ENCODE measurements at regions of chr16 and their contacts with region 1.

Region 1: DNA sequence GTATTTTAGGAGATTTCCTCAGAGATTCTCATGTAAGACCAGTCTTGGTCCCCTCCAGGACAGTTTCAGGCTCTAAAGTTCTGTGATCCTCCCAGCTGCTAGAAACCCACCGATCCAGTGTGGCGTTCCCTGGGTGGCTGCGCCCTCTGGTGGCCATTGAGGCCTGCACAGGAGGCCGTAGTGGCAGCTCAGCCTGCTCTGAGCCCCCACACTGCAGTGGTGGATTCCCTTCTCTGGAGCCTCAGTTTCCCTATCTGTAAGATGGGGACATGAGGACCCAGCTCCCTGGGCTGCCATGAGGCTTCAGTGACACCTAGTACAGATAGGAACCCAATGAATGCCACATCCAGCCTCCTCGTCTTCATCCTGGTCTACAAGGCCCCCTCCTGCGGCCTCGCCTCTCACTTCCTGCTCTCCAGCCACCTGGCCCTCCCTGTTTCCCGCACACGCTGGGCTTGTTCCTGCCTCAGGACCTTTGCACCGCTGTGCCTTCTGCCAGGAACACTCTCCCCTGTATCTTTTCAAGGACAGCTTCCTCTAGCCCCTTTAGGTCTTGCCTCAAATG is 16.5 kb downstream of the CCDC102A start:
- DNase-seq: peak; percentile 61 to 86 (median 73)
- ATAC-seq: peak; percentile 90
- H3K4me3 ChIP-seq: no peak overlapping the region
- H3K4me3 Mint-ChIP-seq: no peak overlapping the region
- H3K27ac ChIP-seq: no peak overlapping the region
- H3K27ac Mint-ChIP-seq: peak overlapping the region in 3 of 9 donors; percentile 62 to 83 (median 76)
- H3K4me1 ChIP-seq: peaks cover 7 to 8% of the 10 kb centered on the region in 2 donors
- H3K4me1 Mint-ChIP-seq: peaks cover 5 to 19% (median 6%) of the 10 kb centered on the region in 7 donors
- H3K27me3 ChIP-seq: no peaks in the 10 kb centered on the region
- H3K27me3 Mint-ChIP-seq: no peaks in the 10 kb centered on the region

Region 2: GRCh38 chr16:57416122-57416509 is 103.8 kb before region 1 on chr16:
- CTCF ChIA-PET with region 1: interaction called, 44 read pairs
- POLR2A ChIA-PET with region 1: no interaction called
- intact Hi-C with region 1: loop called (anchors 1 kb)
- DNase-seq: no peak
- ATAC-seq: no peak
- H3K4me3 ChIP-seq: no peak overlapping the region
- H3K4me3 Mint-ChIP-seq: no peak overlapping the region
- H3K27ac ChIP-seq: no peak overlapping the region
- H3K27ac Mint-ChIP-seq: no peak overlapping the region
- H3K4me1 ChIP-seq: peaks cover 11 to 18% of the 10 kb centered on the region in 2 donors
- H3K4me1 Mint-ChIP-seq: peaks cover 17 to 29% (median 23%) of the 10 kb centered on the region in 7 donors
- H3K27me3 ChIP-seq: no peaks in the 10 kb centered on the region
- H3K27me3 Mint-ChIP-seq: no peaks in the 10 kb centered on the region

Region 3: GRCh38 chr16:57422026-57422944 is 97.6 kb before region 1 on chr16:
- CTCF ChIA-PET with region 1: interaction called, 44 read pairs
- POLR2A ChIA-PET with region 1: interaction called, 3 read pairs
- intact Hi-C with region 1: loop called (anchors 1 kb)
- DNase-seq: no peak
- ATAC-seq: no peak
- H3K4me3 ChIP-seq: no peak overlapping the region
- H3K4me3 Mint-ChIP-seq: no peak overlapping the region
- H3K27ac ChIP-seq: no peak overlapping the region
- H3K27ac Mint-ChIP-seq: peak overlapping the region in 1 of 9 donors; percentile 48
- H3K4me1 ChIP-seq: peaks cover 9 to 10% of the 10 kb centered on the region in 2 donors
- H3K4me1 Mint-ChIP-seq: peaks cover 11 to 29% (median 24%) of the 10 kb centered on the region in 7 donors
- H3K27me3 ChIP-seq: no peaks in the 10 kb centered on the region
- H3K27me3 Mint-ChIP-seq: no peaks in the 10 kb centered on the region

Region 4: GRCh38 chr16:57462209-57462977 is 57.5 kb before region 1 on chr16 and contains the start of gene POLR2C:
- CTCF ChIA-PET with region 1: interaction called, 3 read pairs
- POLR2A ChIA-PET with region 1: interaction called, 6 read pairs
- intact Hi-C with region 1: loop called (anchors 1 to 5 kb)
- DNase-seq: peak; percentile 84 to 96 (median 92)
- ATAC-seq: peak; percentile 99
- H3K4me3 ChIP-seq: peak within 1 kb of the TSS; percentile 86
- H3K4me3 Mint-ChIP-seq: peak within 1 kb of the TSS; percentile 79 to 100 (median 98)
- H3K27ac ChIP-seq: peak within 1 kb of the TSS; percentile 77
- H3K27ac Mint-ChIP-seq: peak within 1 kb of the TSS; percentile 93 to 100 (median 99)
- H3K4me1 ChIP-seq: peaks cover 17 to 23% of the 10 kb centered on the region in 2 donors
- H3K4me1 Mint-ChIP-seq: peaks cover 19 to 45% (median 35%) of the 10 kb centered on the region in 7 donors
- H3K27me3 ChIP-seq: no peaks in the 10 kb centered on the region
- H3K27me3 Mint-ChIP-seq: no peaks in the 10 kb centered on the region
- total RNA-seq, gene POLR2C: 63.4 to 96.3 (median 81.4) TPM

Region 5: DNA sequence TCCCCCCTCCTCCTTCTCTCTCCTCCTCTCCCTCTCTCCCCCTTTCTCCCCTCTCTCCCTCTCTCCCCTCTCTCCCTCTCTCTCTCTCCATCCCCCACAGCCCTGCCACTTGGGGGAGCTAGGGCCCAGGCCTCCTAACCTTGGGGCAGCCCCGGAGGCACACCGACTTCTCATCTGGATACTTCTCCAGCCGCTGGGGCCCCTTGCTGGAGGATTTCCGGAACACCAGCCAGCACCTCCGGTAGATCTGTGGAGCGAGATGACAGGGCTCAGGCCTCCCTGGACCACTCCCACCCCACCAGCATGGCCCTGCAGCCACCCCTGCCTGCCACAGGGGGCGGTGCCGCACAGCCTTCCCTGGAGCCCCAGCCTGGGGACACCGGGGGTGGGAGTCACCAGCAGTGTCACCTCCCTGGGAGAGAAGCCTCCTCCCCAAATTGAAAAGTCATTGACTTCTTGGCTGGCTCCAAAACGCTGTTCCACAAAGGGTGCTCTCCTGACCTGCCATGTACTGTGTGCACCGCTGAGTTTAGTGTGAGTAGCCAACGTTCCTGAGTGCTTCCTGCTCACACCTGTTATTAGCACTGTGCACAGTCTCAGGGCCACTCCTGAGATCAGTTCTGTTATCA is 44.1 kb before region 1 on chr16:
- CTCF ChIA-PET with region 1: interaction called, 3 read pairs
- POLR2A ChIA-PET with region 1: no interaction called
- intact Hi-C with region 1: loop called (anchors 1 kb)
- DNase-seq: peak; percentile 62 to 88 (median 74)
- ATAC-seq: peak; percentile 95
- H3K4me3 ChIP-seq: no peak overlapping the region
- H3K4me3 Mint-ChIP-seq: peak overlapping the region in 8 of 10 donors; percentile 24 to 73 (median 44)
- H3K27ac ChIP-seq: peak overlapping the region; percentile 45
- H3K27ac Mint-ChIP-seq: peak overlapping the region in 3 of 9 donors; percentile 60 to 70 (median 64)
- H3K4me1 ChIP-seq: peaks cover 7 to 8% of the 10 kb centered on the region in 2 donors
- H3K4me1 Mint-ChIP-seq: peaks cover 13 to 26% (median 17%) of the 10 kb centered on the region in 7 donors
- H3K27me3 ChIP-seq: no peaks in the 10 kb centered on the region
- H3K27me3 Mint-ChIP-seq: peaks cover 0 to 2% (median 0%) of the 10 kb centered on the region in 5 donors

Region 6: GRCh38 chr16:57493767-57494166 is 26.1 kb before region 1 on chr16:
- CTCF ChIA-PET with region 1: no interaction called
- POLR2A ChIA-PET with region 1: no interaction called
- intact Hi-C with region 1: no loop called
- DNase-seq: no peak
- ATAC-seq: no peak
- H3K4me3 ChIP-seq: no peak overlapping the region
- H3K4me3 Mint-ChIP-seq: no peak overlapping the region
- H3K27ac ChIP-seq: no peak overlapping the region
- H3K27ac Mint-ChIP-seq: no peak overlapping the region
- H3K4me1 ChIP-seq: no peaks in the 10 kb centered on the region
- H3K4me1 Mint-ChIP-seq: no peaks in the 10 kb centered on the region
- H3K27me3 ChIP-seq: peaks cover 0 to 4% of the 10 kb centered on the region in 2 donors
- H3K27me3 Mint-ChIP-seq: peaks cover 0 to 28% (median 0%) of the 10 kb centered on the region in 5 donors

Region 7: GRCh38 chr16:57530104-57530521 is 10.2 kb after region 1 on chr16:
- CTCF ChIA-PET with region 1: interaction called, 9 read pairs
- POLR2A ChIA-PET with region 1: interaction called, 4 read pairs
- intact Hi-C with region 1: loop called in 1 of 2 experiments (anchors 1 kb)
- DNase-seq: peak in 8 of 9 donors; percentile 56 to 83 (median 68)
- ATAC-seq: peak; percentile 91
- H3K4me3 ChIP-seq: peak overlapping the region; percentile 45
- H3K4me3 Mint-ChIP-seq: peak overlapping the region; percentile 61 to 88 (median 83)
- H3K27ac ChIP-seq: peak overlapping the region; percentile 87
- H3K27ac Mint-ChIP-seq: peak overlapping the region; percentile 85 to 99 (median 96)
- H3K4me1 ChIP-seq: peaks cover 41 to 54% of the 10 kb centered on the region in 2 donors
- H3K4me1 Mint-ChIP-seq: peaks cover 49 to 61% (median 59%) of the 10 kb centered on the region in 7 donors
- H3K27me3 ChIP-seq: no peaks in the 10 kb centered on the region
- H3K27me3 Mint-ChIP-seq: no peaks in the 10 kb centered on the region

Region 8: DNA sequence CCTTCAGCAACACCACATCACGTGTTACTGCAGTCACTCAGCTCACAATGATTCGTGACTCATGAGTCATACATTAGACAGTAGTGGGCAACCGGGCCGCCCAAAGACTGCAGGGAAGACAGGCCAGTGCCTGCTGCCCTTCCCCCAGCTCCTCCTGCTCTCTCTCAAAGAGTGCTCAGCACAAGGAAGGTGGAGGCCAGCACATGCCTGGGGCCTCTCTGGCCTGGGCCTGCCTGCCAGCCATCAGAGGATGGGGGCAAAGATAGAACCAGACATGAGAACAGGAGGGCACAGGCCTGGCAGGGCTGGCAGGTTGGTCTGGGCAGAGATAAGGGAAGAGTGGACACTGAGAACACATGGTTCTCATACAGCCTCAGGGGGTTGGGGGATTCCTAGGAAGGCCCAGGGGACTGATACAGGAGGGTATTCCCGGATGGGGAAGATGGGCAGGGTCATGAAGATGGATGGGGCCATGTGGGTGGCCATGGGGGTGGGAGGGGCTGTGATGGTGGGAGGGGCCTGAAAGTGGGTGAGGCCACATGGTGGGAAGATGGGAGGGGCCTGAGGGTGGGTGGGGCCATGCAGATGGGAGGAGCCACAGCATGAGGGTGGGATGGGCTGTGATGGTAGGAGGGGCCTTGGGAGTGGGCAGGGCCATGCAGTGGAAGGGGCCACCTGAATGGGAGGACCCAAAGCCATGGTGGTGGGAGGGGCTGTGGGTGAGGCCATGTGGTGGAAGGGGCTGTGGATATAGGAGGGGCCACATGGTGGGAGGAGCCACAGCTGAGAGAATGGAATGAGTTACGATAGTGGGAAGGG is 244.7 kb after region 1 on chr16:
- CTCF ChIA-PET with region 1: no interaction called
- POLR2A ChIA-PET with region 1: no interaction called
- intact Hi-C with region 1: no loop called
- DNase-seq: peak in 1 of 9 donors; percentile 6
- ATAC-seq: peak; percentile 68
- H3K4me3 ChIP-seq: no peak overlapping the region
- H3K4me3 Mint-ChIP-seq: no peak overlapping the region
- H3K27ac ChIP-seq: no peak overlapping the region
- H3K27ac Mint-ChIP-seq: no peak overlapping the region
- H3K4me1 ChIP-seq: no peaks in the 10 kb centered on the region
- H3K4me1 Mint-ChIP-seq: no peaks in the 10 kb centered on the region
- H3K27me3 ChIP-seq: no peaks in the 10 kb centered on the region
- H3K27me3 Mint-ChIP-seq: no peaks in the 10 kb centered on the region